Right cardiac atrium (tissue), 5 donors: ENCODE measurements at regions of chr3 and their contacts with region 1.

Region 1: DNA sequence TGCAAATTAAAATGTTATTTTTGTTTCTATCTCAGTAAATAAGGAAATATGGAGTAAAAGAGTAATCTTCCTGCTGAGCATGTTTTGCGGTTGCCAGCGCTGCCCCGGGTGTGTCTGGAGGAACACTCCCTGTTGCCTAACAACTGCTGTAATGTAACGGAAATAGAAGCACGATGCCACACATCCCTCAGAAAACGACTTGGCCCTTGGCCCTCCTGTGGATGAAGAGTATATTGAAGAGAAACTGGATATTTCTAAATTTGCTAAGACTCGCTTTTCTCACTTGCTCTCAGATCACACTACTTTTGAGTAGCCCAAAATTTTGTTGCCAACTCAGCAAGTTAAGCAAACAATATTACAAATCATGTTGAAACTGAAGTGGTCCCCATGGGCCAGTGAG is 18.9 kb downstream of the CX3CR1 start:
- DNase-seq: peak; percentile 91 to 94 (median 92)
- ATAC-seq: peak; percentile 96 to 98
- H3K4me3 ChIP-seq: no peak overlapping the region
- H3K27ac ChIP-seq: no peak overlapping the region
- H3K4me1 ChIP-seq: no peaks in the 10 kb centered on the region
- H3K27me3 ChIP-seq: no peaks in the 10 kb centered on the region

Region 2: GRCh38 chr3:39208463-39209055 is 52.4 kb before region 1 on chr3:
- intact Hi-C with region 1: loop called in 1 of 4 experiments (anchors 2 kb)
- DNase-seq: peak; percentile 42 to 78 (median 63)
- ATAC-seq: peak; percentile 83 to 87
- H3K4me3 ChIP-seq: no peak overlapping the region
- H3K27ac ChIP-seq: no peak overlapping the region
- H3K4me1 ChIP-seq: no peaks in the 10 kb centered on the region
- H3K27me3 ChIP-seq: no peaks in the 10 kb centered on the region

Region 3: DNA sequence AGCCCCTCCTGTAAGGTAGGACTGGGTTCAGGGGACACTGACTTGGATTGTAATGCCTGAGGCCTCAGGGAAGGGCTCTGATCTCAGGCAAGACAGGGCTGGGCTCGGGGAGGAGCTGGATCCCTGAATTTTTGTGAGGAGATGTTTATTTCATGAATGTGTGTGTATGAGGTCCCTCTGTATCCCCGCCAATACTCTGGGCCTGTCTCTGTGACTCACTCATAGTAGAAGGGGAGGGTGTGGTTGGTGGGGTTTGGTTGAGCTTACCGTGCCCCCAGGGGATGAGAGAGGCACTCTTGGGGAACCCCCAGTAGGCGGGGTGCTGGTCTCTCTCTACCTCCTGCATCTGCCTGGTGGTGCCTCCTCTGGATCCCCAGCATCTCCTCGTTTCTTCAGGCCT is 173.6 kb after region 1 on chr3:
- intact Hi-C with region 1: no loop called
- DNase-seq: no peak
- ATAC-seq: peak in 1 of 2 donors; percentile 10
- H3K4me3 ChIP-seq: no peak overlapping the region
- H3K27ac ChIP-seq: no peak overlapping the region
- H3K4me1 ChIP-seq: peaks cover 2% of the 10 kb centered on the region
- H3K27me3 ChIP-seq: no peaks in the 10 kb centered on the region